Activated CD4-positive, alpha-beta memory T cell treated with anti-CD3 and anti-CD28 coated beads for 36 hours (primary cell): ENCODE measurements at regions of chr2 and their contacts with region 1.

Region 1: GRCh38 chr2:229422063-229422462 is 151.0 kb upstream of the PID1 start:
- DNase-seq: no peak
- H3K4me3 Mint-ChIP-seq: no peak overlapping the region
- H3K27ac Mint-ChIP-seq: no peak overlapping the region
- H3K4me1 Mint-ChIP-seq: no peaks in the 10 kb centered on the region
- H3K27me3 Mint-ChIP-seq: peaks cover 2% of the 10 kb centered on the region

Region 2: DNA sequence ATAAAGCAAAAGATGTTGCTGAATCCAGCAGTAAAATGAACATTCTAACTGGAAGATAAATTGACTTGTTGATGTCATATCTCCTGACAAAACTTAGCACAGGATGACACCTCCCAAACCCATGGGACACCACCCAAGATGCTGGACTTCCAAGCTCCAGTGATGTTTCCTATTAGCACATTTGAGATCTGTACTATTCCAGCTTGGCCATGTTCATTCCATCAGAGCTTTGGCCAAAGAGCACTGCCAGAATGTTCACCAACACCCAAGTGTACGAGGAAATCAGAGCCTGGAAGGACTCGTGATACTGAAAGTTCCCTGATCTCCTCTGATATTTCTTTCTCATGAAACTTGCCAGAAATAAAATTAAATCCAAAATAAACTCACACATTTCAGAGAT is 195.7 kb before region 1 on chr2:
- CTCF ChIA-PET with region 1: no interaction called
- POLR2A ChIA-PET with region 1: no interaction called
- intact Hi-C with region 1: no loop called
- DNase-seq: no peak
- H3K4me3 Mint-ChIP-seq: no peak overlapping the region
- H3K27ac Mint-ChIP-seq: no peak overlapping the region
- H3K4me1 Mint-ChIP-seq: no peaks in the 10 kb centered on the region
- H3K27me3 Mint-ChIP-seq: no peaks in the 10 kb centered on the region

Region 3: GRCh38 chr2:229438430-229439159 is 16.5 kb after region 1 on chr2:
- CTCF ChIA-PET with region 1: no interaction called
- POLR2A ChIA-PET with region 1: no interaction called
- intact Hi-C with region 1: loop called (anchors 2 kb)
- DNase-seq: no peak
- H3K4me3 Mint-ChIP-seq: no peak overlapping the region
- H3K27ac Mint-ChIP-seq: no peak overlapping the region
- H3K4me1 Mint-ChIP-seq: no peaks in the 10 kb centered on the region
- H3K27me3 Mint-ChIP-seq: peaks cover 1% of the 10 kb centered on the region